ENCODE measurements at regions of chr14 and their contacts with region 1.

Region 1: DNA sequence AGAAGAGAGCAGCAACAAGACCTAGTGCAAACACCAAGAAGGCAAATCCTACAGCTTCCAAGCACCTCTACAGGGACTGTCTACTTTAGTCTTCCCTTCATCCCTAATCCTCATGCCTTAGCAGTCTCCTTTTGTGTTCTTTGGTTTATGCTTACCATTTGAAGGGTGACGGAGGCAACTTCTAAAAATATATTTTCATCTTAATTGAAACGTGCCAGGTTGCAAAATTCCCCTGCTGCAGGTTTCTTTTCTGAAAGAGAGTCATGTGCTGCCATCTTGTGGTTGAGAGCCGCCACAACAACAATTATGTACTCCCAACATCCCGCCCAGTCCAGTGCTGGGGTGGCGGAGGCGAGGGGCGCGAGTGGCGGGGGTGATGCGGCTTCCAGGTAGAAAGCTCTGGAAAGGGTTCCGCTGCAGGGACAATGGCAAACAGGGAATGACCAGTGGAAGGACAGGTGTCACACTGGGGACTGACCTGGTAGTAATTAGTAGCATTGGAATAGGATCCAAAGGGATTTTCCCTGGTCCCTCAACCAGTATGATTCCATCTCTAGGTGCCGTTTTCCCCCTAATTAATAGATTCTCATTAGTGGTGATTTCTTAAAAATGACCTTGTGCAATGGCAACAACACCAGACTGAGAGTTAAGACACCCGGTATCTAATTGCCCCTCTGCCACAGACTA is 80.3 kb upstream of the GNG2 start:
- DNase-seq: peak; percentile 85
- ATAC-seq: peak; percentile 58
- H3K4me3 ChIP-seq: peak overlapping the region; percentile 41
- H3K27ac ChIP-seq: no peak overlapping the region
- H3K4me1 ChIP-seq: peaks cover 4% of the 10 kb centered on the region; the same call in 1 of the 2 replicates
- H3K27me3 ChIP-seq: no peaks in the 10 kb centered on the region
- CTCF ChIP-seq: peak; percentile 97

Region 2: DNA sequence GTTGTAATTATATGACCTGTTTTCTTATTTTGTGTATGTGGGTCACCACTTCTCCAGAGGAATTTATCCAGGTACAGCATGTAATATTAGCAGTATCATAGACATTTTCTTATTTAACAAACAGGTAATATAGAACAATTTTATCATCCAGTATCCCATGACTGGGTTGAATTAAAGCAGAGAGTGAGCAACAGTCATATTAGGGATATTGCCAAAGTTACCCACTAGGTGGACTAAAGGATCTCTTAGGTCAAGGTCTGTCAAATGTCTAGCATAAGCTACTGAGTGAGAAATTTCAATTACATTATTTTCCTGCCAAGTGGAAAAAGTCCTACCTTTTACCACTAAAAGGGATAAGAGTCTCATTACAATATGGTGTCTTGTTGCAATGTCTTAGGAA is 623.1 kb before region 1 on chr14:
- CTCF ChIA-PET with region 1: interaction called, 4 read pairs
- POLR2A ChIA-PET with region 1: no interaction called
- intact Hi-C with region 1: loop called (anchors 10 kb)
- DNase-seq: peak; percentile 75
- ATAC-seq: peak; percentile 98
- H3K4me3 ChIP-seq: no peak overlapping the region
- H3K27ac ChIP-seq: no peak overlapping the region
- H3K4me1 ChIP-seq: peaks cover 11% of the 10 kb centered on the region
- H3K27me3 ChIP-seq: no peaks in the 10 kb centered on the region
- CTCF ChIP-seq: peak; percentile 91

Region 3: DNA sequence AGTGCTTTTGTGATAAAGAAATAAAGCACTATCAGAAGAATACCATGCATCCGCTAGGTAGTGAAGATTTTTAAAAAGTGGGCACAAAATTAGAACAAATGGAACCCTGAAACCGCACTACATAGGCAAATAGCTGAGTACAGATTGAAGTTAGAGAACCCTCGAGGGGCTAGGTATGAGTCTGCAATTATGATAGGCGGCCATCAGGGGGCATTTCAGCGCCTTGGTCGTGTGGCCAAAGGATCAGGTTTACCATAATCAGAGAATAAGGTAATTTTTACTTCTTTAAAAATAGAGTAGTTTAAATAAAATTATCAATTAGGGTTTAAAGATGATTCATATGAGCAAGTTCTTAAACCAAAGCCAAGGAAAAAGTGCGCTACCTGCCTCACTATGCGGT is 410.3 kb before region 1 on chr14:
- CTCF ChIA-PET with region 1: interaction called, 8 read pairs
- POLR2A ChIA-PET with region 1: interaction called, 3 read pairs
- intact Hi-C with region 1: loop called (anchors 10 kb)
- DNase-seq: peak; percentile 51
- ATAC-seq: peak; percentile 50
- H3K4me3 ChIP-seq: no peak overlapping the region
- H3K27ac ChIP-seq: peak overlapping the region; percentile 21; the same call in 1 of the 2 replicates
- H3K4me1 ChIP-seq: peaks cover 24% of the 10 kb centered on the region
- H3K27me3 ChIP-seq: no peaks in the 10 kb centered on the region
- CTCF ChIP-seq: peak; percentile 85

Region 4: GRCh38 chr14:51448831-51449670 is 331.1 kb before region 1 on chr14:
- CTCF ChIA-PET with region 1: no interaction called
- POLR2A ChIA-PET with region 1: no interaction called
- intact Hi-C with region 1: loop called (anchors 10 kb)
- DNase-seq: no peak
- ATAC-seq: peak; percentile 63
- H3K4me3 ChIP-seq: no peak overlapping the region
- H3K27ac ChIP-seq: 0 out of 2 replicates have a peak overlapping the region, but pooled peaks have one; percentile 1
- H3K4me1 ChIP-seq: peaks cover 20% of the 10 kb centered on the region
- H3K27me3 ChIP-seq: no peaks in the 10 kb centered on the region
- CTCF ChIP-seq: no peak

Region 5: DNA sequence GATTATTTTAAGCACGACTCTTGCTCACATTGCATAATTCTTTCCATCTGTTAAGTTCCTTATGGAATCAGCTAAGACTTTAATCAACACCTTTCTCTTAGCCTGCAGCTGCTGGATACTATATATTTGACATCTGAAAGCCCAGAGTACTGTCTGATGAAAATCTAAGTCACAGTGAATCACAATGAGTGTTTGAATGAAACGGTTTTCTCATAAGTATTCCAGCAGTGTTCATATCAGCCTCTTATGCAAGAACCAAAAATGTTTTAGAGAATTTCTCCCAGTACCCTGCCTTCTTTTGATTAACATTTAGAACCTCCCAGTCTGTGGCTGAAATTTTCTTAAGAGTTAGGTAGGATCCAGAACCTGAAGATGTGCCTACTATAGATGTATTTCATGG is 72.8 kb before region 1 on chr14:
- CTCF ChIA-PET with region 1: no interaction called
- POLR2A ChIA-PET with region 1: no interaction called
- intact Hi-C with region 1: loop called (anchors 2 kb)
- DNase-seq: no peak
- ATAC-seq: no peak
- H3K4me3 ChIP-seq: no peak overlapping the region
- H3K27ac ChIP-seq: no peak overlapping the region
- H3K4me1 ChIP-seq: peaks cover 8% of the 10 kb centered on the region
- H3K27me3 ChIP-seq: no peaks in the 10 kb centered on the region
- CTCF ChIP-seq: no peak

Region 6: GRCh38 chr14:51939727-51940390 is 159.7 kb after region 1 on chr14:
- CTCF ChIA-PET with region 1: interaction called, 15 read pairs
- POLR2A ChIA-PET with region 1: no interaction called
- intact Hi-C with region 1: no loop called
- DNase-seq: no peak
- ATAC-seq: no peak
- H3K4me3 ChIP-seq: no peak overlapping the region
- H3K27ac ChIP-seq: no peak overlapping the region
- H3K4me1 ChIP-seq: no peaks in the 10 kb centered on the region
- H3K27me3 ChIP-seq: no peaks in the 10 kb centered on the region
- CTCF ChIP-seq: no peak

Region 7: GRCh38 chr14:52131640-52132320 is 351.6 kb after region 1 on chr14:
- CTCF ChIA-PET with region 1: no interaction called
- POLR2A ChIA-PET with region 1: no interaction called
- intact Hi-C with region 1: loop called (anchors 1 kb)
- DNase-seq: peak; percentile 95
- ATAC-seq: peak; percentile 98
- H3K4me3 ChIP-seq: no peak overlapping the region
- H3K27ac ChIP-seq: no peak overlapping the region
- H3K4me1 ChIP-seq: peaks cover 6% of the 10 kb centered on the region; the same call in 1 of the 2 replicates
- H3K27me3 ChIP-seq: no peaks in the 10 kb centered on the region
- CTCF ChIP-seq: peak; percentile 92